ENCODE measurements at regions of chr17 and their contacts with region 1.

Region 1: GRCh38 chr17:31696184-31696602 is 162.9 kb downstream of the COPRS start:
- DNase-seq: peak; percentile 88
- H3K4me3 ChIP-seq: peak overlapping the region; percentile 15
- H3K27ac ChIP-seq: peak overlapping the region; percentile 91
- H3K4me1 ChIP-seq: peaks cover 60% of the 10 kb centered on the region
- H3K27me3 ChIP-seq: no peaks in the 10 kb centered on the region
- CTCF ChIP-seq: peak; percentile 51

Region 2: GRCh38 chr17:31754239-31754945 is 58.2 kb after region 1 on chr17:
- intact Hi-C with region 1: loop called (anchors 10 kb)
- DNase-seq: no peak
- H3K4me3 ChIP-seq: no peak overlapping the region
- H3K27ac ChIP-seq: no peak overlapping the region
- H3K4me1 ChIP-seq: peaks cover 11% of the 10 kb centered on the region
- H3K27me3 ChIP-seq: no peaks in the 10 kb centered on the region
- CTCF ChIP-seq: no peak

Region 3: DNA sequence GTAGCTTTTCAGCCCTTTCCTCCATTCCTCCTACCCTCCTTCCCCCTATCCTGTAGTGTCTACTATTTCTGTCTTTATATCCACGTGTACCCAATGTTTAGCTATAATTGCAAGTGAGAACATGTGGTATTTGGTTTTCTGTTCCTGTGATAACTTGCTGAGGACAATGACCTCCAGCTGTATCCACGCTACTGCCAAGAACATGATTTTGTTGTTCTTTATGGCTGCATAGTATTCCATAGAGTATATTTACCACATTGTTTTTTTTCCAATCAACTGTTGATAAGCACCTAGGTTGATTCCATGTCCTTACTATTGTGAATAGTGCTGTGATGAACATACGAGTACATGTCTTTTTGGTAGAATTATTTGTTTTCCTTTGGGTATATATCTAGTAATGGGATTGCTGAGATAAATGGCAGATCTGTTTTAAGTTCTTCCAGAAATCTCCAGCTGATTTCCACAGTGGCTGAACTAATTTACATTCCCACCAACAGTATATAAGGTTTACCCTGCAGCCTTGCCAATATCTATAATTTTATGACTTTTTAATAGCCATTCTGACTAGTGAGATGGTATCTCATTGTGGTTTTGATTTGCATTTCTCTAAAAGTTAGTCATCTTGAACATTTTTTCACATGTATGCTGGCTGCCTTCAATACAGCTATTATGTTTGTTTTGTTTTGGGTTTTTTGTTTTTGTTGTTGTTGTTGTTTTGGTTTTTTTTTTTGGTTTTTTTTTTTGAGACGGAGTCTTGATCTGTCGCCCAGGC is 173.8 kb after region 1 on chr17:
- intact Hi-C with region 1: no loop called
- DNase-seq: no peak
- H3K4me3 ChIP-seq: no peak overlapping the region
- H3K27ac ChIP-seq: no peak overlapping the region
- H3K4me1 ChIP-seq: no peaks in the 10 kb centered on the region
- H3K27me3 ChIP-seq: no peaks in the 10 kb centered on the region
- CTCF ChIP-seq: no peak